Mammary epithelial cell (primary cell): ENCODE measurements at regions of chr5 and their contacts with region 1.

Region 1: GRCh38 chr5:6765612-6766525 is 52.6 kb downstream of the TENT4A start:
- DNase-seq: peak; percentile 79
- H3K4me3 ChIP-seq: peak overlapping the region; percentile 8 to 29 (median 23)
- H3K27ac ChIP-seq: peak overlapping the region; percentile 41
- H3K4me1 ChIP-seq: peaks cover 25% of the 10 kb centered on the region
- H3K27me3 ChIP-seq: no peaks in the 10 kb centered on the region
- CTCF ChIP-seq: peak; percentile 91 to 94

Region 2: GRCh38 chr5:6820851-6821479 is 55.1 kb after region 1 on chr5:
- CTCF ChIA-PET with region 1: no interaction called
- dilution Hi-C with region 1: no loop called
- in situ Hi-C with region 1: no loop called
- intact Hi-C with region 1: loop called (anchors 2 kb)
- DNase-seq: no peak
- H3K4me3 ChIP-seq: no peak overlapping the region
- H3K27ac ChIP-seq: no peak overlapping the region
- H3K4me1 ChIP-seq: no peaks in the 10 kb centered on the region
- H3K27me3 ChIP-seq: peaks cover 2% of the 10 kb centered on the region
- CTCF ChIP-seq: peak; percentile 59 to 60

Region 3: GRCh38 chr5:7391814-7392692 is 626.2 kb after region 1 on chr5:
- CTCF ChIA-PET with region 1: no interaction called
- dilution Hi-C with region 1: no loop called
- in situ Hi-C with region 1: no loop called
- intact Hi-C with region 1: loop called (anchors 1 kb)
- DNase-seq: no peak
- H3K4me3 ChIP-seq: no peak overlapping the region
- H3K27ac ChIP-seq: no peak overlapping the region
- H3K4me1 ChIP-seq: peaks cover 5% of the 10 kb centered on the region
- H3K27me3 ChIP-seq: peaks cover 6% of the 10 kb centered on the region
- CTCF ChIP-seq: peak in 1 of 2 donors; percentile 45

Region 4: GRCh38 chr5:7754992-7755596 is 989.2 kb after region 1 on chr5:
- CTCF ChIA-PET with region 1: no interaction called
- dilution Hi-C with region 1: no loop called
- in situ Hi-C with region 1: no loop called
- intact Hi-C with region 1: loop called (anchors 2 kb)
- DNase-seq: peak; percentile 24
- H3K4me3 ChIP-seq: no peak overlapping the region
- H3K27ac ChIP-seq: no peak overlapping the region
- H3K4me1 ChIP-seq: no peaks in the 10 kb centered on the region
- H3K27me3 ChIP-seq: no peaks in the 10 kb centered on the region
- CTCF ChIP-seq: peak; percentile 75 to 86

Region 5: DNA sequence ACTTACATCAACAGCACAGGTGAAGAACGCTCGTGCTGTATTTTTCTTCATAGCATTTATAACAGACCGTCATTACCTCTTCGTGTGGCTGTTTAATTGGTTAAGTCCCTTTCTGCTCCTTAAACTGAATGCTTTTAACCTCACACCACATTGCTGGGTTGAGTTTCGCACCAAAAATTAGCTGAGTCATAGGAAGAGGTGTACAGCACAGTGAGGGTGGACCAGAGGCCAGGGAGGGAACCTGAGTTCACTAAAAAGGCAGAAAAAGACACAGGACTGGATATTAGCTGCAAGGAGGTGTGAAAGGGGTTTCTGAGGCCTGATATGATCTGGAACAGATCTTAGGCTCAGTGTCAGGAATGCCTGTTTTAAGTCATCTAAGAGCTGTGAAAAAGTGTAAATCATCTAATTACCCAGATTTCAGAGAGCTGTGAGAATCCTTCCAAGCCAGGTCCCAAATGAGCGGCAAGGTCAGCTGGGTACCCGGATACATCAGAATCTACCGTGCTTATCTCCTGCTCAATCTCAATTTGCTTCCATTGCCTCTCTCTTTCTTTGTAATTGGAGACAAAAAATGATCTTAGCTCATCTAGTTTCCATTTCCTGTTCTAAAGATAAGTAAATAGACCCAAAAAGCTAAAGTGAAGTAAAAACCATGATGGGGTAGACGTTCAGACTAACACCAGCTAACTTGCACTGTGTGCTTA is 1092.2 kb after region 1 on chr5:
- CTCF ChIA-PET with region 1: no interaction called
- dilution Hi-C with region 1: no loop called
- in situ Hi-C with region 1: loop called in 1 of 2 experiments (anchors 25 kb)
- intact Hi-C with region 1: loop called (anchors 2 kb)
- DNase-seq: no peak
- H3K4me3 ChIP-seq: no peak overlapping the region
- H3K27ac ChIP-seq: no peak overlapping the region
- H3K4me1 ChIP-seq: no peaks in the 10 kb centered on the region
- H3K27me3 ChIP-seq: no peaks in the 10 kb centered on the region
- CTCF ChIP-seq: no peak